Right ventricle myocardium inferior (tissue), 1 donor: ENCODE measurements at regions of chr4 and their contacts with region 1.

Region 1: GRCh38 chr4:121686255-121686654 is 10.5 kb downstream of the ANXA5 start:
- DNase-seq: no peak
- ATAC-seq: no peak

Region 2: GRCh38 chr4:122065915-122066314 is 379.7 kb after region 1 on chr4:
- intact Hi-C with region 1: no loop called
- DNase-seq: no peak
- ATAC-seq: no peak

Region 3: DNA sequence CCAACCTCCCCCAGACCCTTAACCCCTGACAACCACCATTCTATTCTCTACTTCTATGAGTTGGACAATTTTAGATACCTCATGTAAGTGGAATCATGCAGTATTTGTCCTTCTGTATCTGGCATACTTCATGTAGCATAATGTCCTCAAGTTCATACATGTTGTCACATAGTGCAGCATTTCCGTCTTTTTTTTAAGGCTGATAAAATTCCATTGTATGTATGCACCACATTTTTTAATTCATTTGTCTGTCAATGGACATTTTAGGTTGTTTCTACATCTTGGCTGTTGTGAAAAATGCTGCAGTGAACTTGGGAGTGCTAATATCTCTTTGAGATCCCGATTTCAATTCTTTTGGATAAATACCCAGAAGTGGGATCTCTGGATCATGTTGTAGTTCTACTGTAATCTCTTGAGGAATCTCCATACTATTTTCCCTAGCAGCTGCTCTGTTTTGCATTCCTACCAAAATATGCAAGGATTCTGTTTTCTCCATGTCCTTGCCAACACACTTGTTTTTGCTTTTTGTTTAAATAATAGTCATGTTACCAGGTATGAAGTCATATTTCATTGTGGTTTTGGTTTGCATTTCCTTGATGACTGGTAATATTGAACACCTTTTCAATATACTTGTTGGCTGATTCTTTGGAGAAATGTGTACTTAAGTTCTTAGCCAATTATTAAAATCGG is 643.8 kb after region 1 on chr4:
- intact Hi-C with region 1: loop called (anchors 10 kb)
- DNase-seq: no peak
- ATAC-seq: no peak